Activated naive CD4-positive, alpha-beta T cell treated with anti-CD3 and anti-CD28 coated beads for 36 hours (primary cell): ENCODE measurements at regions of chr16 and their contacts with region 1.

Region 1: GRCh38 chr16:67561824-67562525 is 351 bp upstream of the CTCF start:
- DNase-seq: peak; percentile 98
- H3K4me3 Mint-ChIP-seq: peak overlapping the region; percentile 78
- H3K27ac Mint-ChIP-seq: peak overlapping the region; percentile 86
- H3K4me1 Mint-ChIP-seq: peaks cover 45% of the 10 kb centered on the region
- H3K27me3 Mint-ChIP-seq: no peaks in the 10 kb centered on the region

Region 2: GRCh38 chr16:67028555-67029248 is 533.3 kb before region 1 on chr16 and contains the start of gene CBFB:
- CTCF ChIA-PET with region 1: no interaction called
- intact Hi-C with region 1: loop called (anchors 2 kb)
- DNase-seq: peak; percentile 93
- H3K4me3 Mint-ChIP-seq: peak within 1 kb of the TSS; percentile 86
- H3K27ac Mint-ChIP-seq: peak within 1 kb of the TSS; percentile 91
- H3K4me1 Mint-ChIP-seq: peaks cover 38% of the 10 kb centered on the region
- H3K27me3 Mint-ChIP-seq: no peaks in the 10 kb centered on the region
- total RNA-seq, gene CBFB: 79.6 to 86.8 TPM

Region 3: DNA sequence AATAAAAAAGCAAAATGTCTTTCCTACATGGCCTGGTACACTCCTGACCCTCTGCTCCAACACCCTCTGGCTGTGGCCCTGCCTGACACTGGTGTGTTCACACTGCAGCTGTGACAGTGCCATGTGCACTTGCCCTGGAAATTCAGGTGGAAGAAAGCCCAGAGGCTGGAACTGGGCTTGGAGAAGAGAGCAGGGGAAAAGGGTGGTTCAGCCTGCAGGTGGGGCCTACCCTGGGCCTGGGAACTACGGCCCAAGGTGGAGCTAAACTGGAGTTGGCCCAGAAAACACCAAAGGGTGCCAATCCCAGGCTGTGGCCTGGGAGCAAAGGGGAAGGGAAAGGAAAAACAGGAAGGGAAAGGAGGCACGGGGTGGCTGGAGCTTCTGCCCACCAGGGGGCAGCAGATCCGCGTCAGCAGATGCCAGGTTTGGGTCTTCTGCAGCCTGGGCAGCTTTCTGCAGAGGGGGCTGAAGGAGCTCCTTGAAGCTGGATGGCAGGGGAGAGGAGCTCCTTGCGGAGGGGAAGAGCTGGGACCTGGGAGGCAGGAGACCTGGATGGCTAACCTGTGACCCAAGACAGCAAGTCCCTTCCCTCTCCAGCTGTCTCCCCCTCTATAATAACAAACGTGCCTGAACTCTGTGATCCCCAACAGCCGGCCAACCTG is 15.1 kb before region 1 on chr16:
- CTCF ChIA-PET with region 1: interaction called, 142 read pairs
- intact Hi-C with region 1: loop called (anchors 1 kb)
- DNase-seq: peak; percentile 81
- H3K4me3 Mint-ChIP-seq: peak overlapping the region; percentile 14
- H3K27ac Mint-ChIP-seq: peak overlapping the region; percentile 91
- H3K4me1 Mint-ChIP-seq: peaks cover 34% of the 10 kb centered on the region
- H3K27me3 Mint-ChIP-seq: no peaks in the 10 kb centered on the region

Region 4: GRCh38 chr16:67660564-67661028 is 98.6 kb after region 1 on chr16 and contains the start of gene PARD6A:
- CTCF ChIA-PET with region 1: interaction called, 12 read pairs
- intact Hi-C with region 1: loop called (anchors 1 kb)
- DNase-seq: peak; percentile 97
- H3K4me3 Mint-ChIP-seq: peak within 1 kb of the TSS; percentile 90
- H3K27ac Mint-ChIP-seq: peak within 1 kb of the TSS; percentile 92
- H3K4me1 Mint-ChIP-seq: peaks cover 21% of the 10 kb centered on the region
- H3K27me3 Mint-ChIP-seq: no peaks in the 10 kb centered on the region
- total RNA-seq, gene PARD6A: 7.3 to 8.4 TPM

Region 5: DNA sequence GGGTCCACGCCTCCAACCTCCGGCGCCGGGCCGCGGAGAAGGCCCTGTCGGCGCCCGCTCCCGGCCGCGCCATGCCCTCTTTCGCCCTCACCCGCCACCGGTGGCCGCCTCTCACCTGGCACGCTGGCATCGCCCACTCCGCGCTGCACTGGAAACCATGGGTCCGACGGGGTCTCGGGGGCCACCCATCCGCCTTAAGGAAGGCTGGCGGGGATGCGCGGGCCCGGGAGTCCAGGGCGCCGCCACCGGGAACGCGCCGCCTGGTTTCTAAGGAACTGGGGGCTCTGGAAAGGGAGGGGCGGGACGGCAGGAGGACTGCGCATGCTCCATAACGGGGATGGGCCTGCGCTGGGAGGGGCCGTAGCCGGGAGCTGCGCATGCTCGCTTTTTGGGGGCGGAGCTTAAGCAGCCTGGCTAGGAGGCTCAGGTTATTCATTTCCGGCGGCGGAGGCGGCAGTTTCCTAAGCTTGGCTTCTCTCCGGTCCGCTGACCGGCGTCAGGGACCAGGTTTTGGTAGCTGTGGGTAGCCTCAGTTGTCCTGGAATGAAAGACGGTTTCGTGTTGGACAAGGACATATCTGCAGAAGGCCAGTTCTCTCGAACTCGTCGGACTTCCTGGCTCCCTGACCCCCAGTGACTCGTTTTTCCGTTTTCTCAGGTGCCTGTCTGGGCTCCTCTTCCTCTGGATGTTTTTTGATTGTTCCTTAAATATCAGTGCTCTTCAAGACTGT is 157.2 kb after region 1 on chr16 and contains the start of gene GFOD2:
- CTCF ChIA-PET with region 1: no interaction called
- intact Hi-C with region 1: loop called (anchors 1 kb)
- DNase-seq: peak; percentile 99
- H3K4me3 Mint-ChIP-seq: peak within 1 kb of the TSS; percentile 96
- H3K27ac Mint-ChIP-seq: peak within 1 kb of the TSS; percentile 96
- H3K4me1 Mint-ChIP-seq: peaks cover 36% of the 10 kb centered on the region
- H3K27me3 Mint-ChIP-seq: no peaks in the 10 kb centered on the region
- total RNA-seq, gene GFOD2: 7.3 to 8.2 TPM

Region 6: GRCh38 chr16:67917852-67918236 is 355.9 kb after region 1 on chr16:
- CTCF ChIA-PET with region 1: no interaction called
- intact Hi-C with region 1: loop called (anchors 5 kb)
- DNase-seq: peak; percentile 81
- H3K4me3 Mint-ChIP-seq: no peak overlapping the region
- H3K27ac Mint-ChIP-seq: peak overlapping the region; percentile 89
- H3K4me1 Mint-ChIP-seq: peaks cover 38% of the 10 kb centered on the region
- H3K27me3 Mint-ChIP-seq: no peaks in the 10 kb centered on the region

Region 7: GRCh38 chr16:67987460-67988160 is 425.6 kb after region 1 on chr16:
- CTCF ChIA-PET with region 1: no interaction called
- intact Hi-C with region 1: no loop called
- DNase-seq: no peak
- H3K4me3 Mint-ChIP-seq: no peak overlapping the region
- H3K27ac Mint-ChIP-seq: peak overlapping the region; percentile 55
- H3K4me1 Mint-ChIP-seq: peaks cover 27% of the 10 kb centered on the region
- H3K27me3 Mint-ChIP-seq: no peaks in the 10 kb centered on the region

Region 8: GRCh38 chr16:68605746-68606145 is 1043.8 kb after region 1 on chr16:
- CTCF ChIA-PET with region 1: no interaction called
- intact Hi-C with region 1: no loop called
- DNase-seq: no peak
- H3K4me3 Mint-ChIP-seq: no peak overlapping the region
- H3K27ac Mint-ChIP-seq: no peak overlapping the region
- H3K4me1 Mint-ChIP-seq: no peaks in the 10 kb centered on the region
- H3K27me3 Mint-ChIP-seq: no peaks in the 10 kb centered on the region